ENCODE measurements at regions of chr15 and their contacts with region 1.

Region 1: GRCh38 chr15:51380999-51381795 is 39.7 kb downstream of the GLDN start:
- DNase-seq: peak in 1 of 2 donors; percentile 67
- ATAC-seq: peak; percentile 88 to 95 (median 91)
- H3K4me3 ChIP-seq: peak overlapping the region in 1 of 10 donors; percentile 21
- H3K27ac ChIP-seq: no peak overlapping the region
- H3K4me1 ChIP-seq: peaks cover 0 to 17% (median 8%) of the 10 kb centered on the region in 9 donors
- H3K27me3 ChIP-seq: no peaks in the 10 kb centered on the region
- CTCF ChIP-seq: peak; percentile 82 to 96 (median 89)

Region 2: GRCh38 chr15:50697109-50697797 is 683.9 kb before region 1 on chr15:
- intact Hi-C with region 1: no loop called
- DNase-seq: no peak
- ATAC-seq: no peak
- H3K4me3 ChIP-seq: no peak overlapping the region
- H3K27ac ChIP-seq: no peak overlapping the region
- H3K4me1 ChIP-seq: no peaks in the 10 kb centered on the region
- H3K27me3 ChIP-seq: no peaks in the 10 kb centered on the region
- CTCF ChIP-seq: no peak

Region 3: DNA sequence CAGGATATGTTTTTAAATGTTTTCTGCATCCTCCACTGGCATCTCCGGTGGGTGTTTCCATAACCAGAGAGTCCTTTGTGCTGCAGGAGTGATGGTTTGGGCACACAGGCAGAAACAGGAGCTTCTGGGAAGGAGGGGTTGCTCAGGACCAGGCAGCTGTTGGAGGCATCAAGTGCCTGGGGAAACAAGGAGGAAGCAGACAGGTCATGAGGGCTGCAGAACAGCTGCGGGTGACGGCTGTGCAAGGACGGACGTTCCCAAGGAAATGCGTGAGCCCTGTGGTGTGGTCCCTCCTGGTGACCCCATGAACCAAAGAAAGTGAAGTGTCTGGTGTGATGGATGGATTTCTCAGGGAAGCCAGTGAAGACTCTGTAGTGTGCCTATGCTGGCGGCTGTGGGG is 225.3 kb before region 1 on chr15:
- intact Hi-C with region 1: loop called in 5 of 10 experiments (anchors 5 to 10 kb)
- DNase-seq: no peak
- ATAC-seq: peak in 7 of 8 donors; percentile 17 to 88 (median 38)
- H3K4me3 ChIP-seq: no peak overlapping the region
- H3K27ac ChIP-seq: no peak overlapping the region
- H3K4me1 ChIP-seq: peaks cover 0 to 14% (median 0%) of the 10 kb centered on the region in 9 donors
- H3K27me3 ChIP-seq: no peaks in the 10 kb centered on the region
- CTCF ChIP-seq: no peak

Region 4: GRCh38 chr15:51162865-51163762 is 218.1 kb before region 1 on chr15:
- intact Hi-C with region 1: loop called (anchors 1 to 10 kb)
- DNase-seq: peak; percentile 55 to 74
- ATAC-seq: peak; percentile 82 to 96 (median 93)
- H3K4me3 ChIP-seq: peak overlapping the region in 6 of 10 donors; percentile 7 to 30 (median 18)
- H3K27ac ChIP-seq: peak overlapping the region in 8 of 10 donors; percentile 23 to 67 (median 62)
- H3K4me1 ChIP-seq: peaks cover 0 to 19% (median 8%) of the 10 kb centered on the region in 9 donors
- H3K27me3 ChIP-seq: no peaks in the 10 kb centered on the region
- CTCF ChIP-seq: peak; percentile 94 to 97 (median 96)

Region 5: GRCh38 chr15:51227940-51228783 is 153.0 kb before region 1 on chr15:
- intact Hi-C with region 1: loop called in 7 of 10 experiments (anchors 1 to 5 kb)
- DNase-seq: peak; percentile 16 to 22
- ATAC-seq: peak; percentile 51 to 93 (median 84)
- H3K4me3 ChIP-seq: no peak overlapping the region
- H3K27ac ChIP-seq: peak overlapping the region in 1 of 10 donors; percentile 62
- H3K4me1 ChIP-seq: peaks cover 0 to 52% (median 12%) of the 10 kb centered on the region in 9 donors
- H3K27me3 ChIP-seq: no peaks in the 10 kb centered on the region
- CTCF ChIP-seq: no peak

Region 6: GRCh38 chr15:51281368-51281967 is 99.7 kb before region 1 on chr15:
- intact Hi-C with region 1: loop called (anchors 1 to 5 kb)
- DNase-seq: peak; percentile 63 to 64
- ATAC-seq: peak; percentile 84 to 95 (median 92)
- H3K4me3 ChIP-seq: no peak overlapping the region
- H3K27ac ChIP-seq: peak overlapping the region in 5 of 10 donors; percentile 6 to 42 (median 26)
- H3K4me1 ChIP-seq: peaks cover 0 to 26% (median 0%) of the 10 kb centered on the region in 9 donors
- H3K27me3 ChIP-seq: peaks cover 0 to 18% (median 7%) of the 10 kb centered on the region in 7 donors
- CTCF ChIP-seq: peak; percentile 63 to 83 (median 78)

Region 7: GRCh38 chr15:51286791-51287190 is 94.4 kb before region 1 on chr15:
- intact Hi-C with region 1: loop called (anchors 1 to 5 kb)
- DNase-seq: no peak
- ATAC-seq: peak in 6 of 8 donors; percentile 50 to 61 (median 58)
- H3K4me3 ChIP-seq: no peak overlapping the region
- H3K27ac ChIP-seq: no peak overlapping the region
- H3K4me1 ChIP-seq: peaks cover 0 to 21% (median 0%) of the 10 kb centered on the region in 9 donors
- H3K27me3 ChIP-seq: no peaks in the 10 kb centered on the region
- CTCF ChIP-seq: peak in 8 of 9 donors; percentile 7 to 56 (median 40)

Region 8: DNA sequence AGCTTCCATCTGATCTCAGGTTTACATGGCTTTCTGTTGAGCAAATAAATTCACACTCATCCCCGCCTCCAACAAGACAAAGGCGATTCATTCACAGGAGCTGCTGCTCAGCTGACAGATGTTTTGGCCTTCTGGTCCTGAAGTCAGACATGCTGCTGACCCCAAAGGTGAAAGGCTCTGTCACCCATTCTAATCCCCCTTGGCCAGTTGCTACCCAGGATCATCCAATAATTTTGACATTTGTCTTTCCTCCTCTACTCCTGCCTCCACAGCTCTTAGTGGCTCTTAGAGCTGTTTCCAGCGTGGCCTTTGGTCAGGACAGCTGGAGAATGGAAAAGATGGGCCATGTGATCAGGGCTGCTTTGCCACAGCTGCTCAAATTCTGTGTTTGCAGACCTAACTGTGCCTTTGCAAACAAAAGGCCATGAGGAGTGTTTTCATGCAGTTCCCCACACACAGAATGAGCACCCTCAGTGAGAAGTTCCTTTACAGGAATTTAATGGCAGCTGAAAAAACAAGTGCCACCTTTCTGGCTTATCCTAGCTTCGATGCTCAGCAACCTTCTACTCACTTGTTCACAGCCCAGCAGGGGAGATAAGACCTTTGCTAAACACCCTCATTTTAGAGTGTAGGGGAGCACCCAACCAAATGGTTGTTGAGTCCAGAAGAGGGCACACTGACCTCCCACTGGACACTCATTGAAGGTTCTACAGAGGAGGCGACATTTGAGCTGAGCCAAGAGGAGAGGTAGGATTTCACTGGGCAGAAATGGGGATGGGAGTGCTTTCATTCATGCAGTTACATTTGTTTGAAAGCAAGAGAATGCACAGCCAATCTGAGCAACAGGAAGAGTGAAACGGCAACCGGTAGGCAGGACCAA is 81.8 kb before region 1 on chr15:
- intact Hi-C with region 1: no loop called
- DNase-seq: no peak
- ATAC-seq: peak in 4 of 8 donors; percentile 35 to 60 (median 45)
- H3K4me3 ChIP-seq: no peak overlapping the region
- H3K27ac ChIP-seq: peak overlapping the region in 3 of 10 donors; percentile 1 to 56 (median 17)
- H3K4me1 ChIP-seq: peaks cover 0 to 19% (median 8%) of the 10 kb centered on the region in 9 donors
- H3K27me3 ChIP-seq: no peaks in the 10 kb centered on the region
- CTCF ChIP-seq: no peak

Region 9: GRCh38 chr15:51322621-51323296 is 58.4 kb before region 1 on chr15:
- intact Hi-C with region 1: loop called in 1 of 10 experiments (anchors 5 kb)
- DNase-seq: peak; percentile 30 to 43
- ATAC-seq: peak; percentile 52 to 83 (median 64)
- H3K4me3 ChIP-seq: no peak overlapping the region
- H3K27ac ChIP-seq: peak overlapping the region in 7 of 10 donors; percentile 4 to 65 (median 42)
- H3K4me1 ChIP-seq: peaks cover 0 to 34% (median 13%) of the 10 kb centered on the region in 9 donors
- H3K27me3 ChIP-seq: no peaks in the 10 kb centered on the region
- CTCF ChIP-seq: no peak

Region 10: DNA sequence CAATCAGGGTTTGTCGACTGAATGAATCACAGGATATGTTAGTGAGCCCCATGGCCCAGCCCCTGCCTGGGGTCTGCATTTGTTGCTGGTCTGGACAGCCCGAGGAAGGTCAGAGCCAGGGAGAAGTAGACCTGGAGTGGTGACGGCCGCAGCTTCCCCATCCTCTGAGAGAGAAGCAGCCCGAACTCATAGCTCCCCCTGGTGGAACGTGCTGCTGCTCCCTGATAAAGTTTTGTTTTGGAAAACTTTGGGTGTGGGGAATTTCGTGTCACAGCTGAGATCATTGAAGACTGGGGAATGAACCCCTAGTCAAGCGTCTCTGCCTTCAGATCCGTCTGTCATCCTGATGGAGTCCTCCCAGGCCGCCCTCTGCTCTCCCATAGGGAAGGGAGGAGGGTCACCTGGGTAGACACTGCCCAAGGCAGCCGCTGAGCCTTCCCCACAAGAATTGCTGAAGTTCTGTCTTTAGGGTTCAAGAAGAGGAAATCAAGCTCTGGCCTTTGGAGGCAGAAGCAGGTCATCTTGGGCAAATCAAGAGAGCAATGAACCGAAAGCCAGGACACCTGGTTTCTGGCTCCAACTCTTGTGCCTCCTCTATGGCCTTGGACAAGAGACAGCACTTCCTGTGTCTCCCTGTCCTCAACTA is 20.8 kb after region 1 on chr15:
- intact Hi-C with region 1: no loop called
- DNase-seq: peak; percentile 27 to 34
- ATAC-seq: peak in 5 of 8 donors; percentile 46 to 59 (median 47)
- H3K4me3 ChIP-seq: no peak overlapping the region
- H3K27ac ChIP-seq: no peak overlapping the region
- H3K4me1 ChIP-seq: peaks cover 0 to 6% (median 0%) of the 10 kb centered on the region in 9 donors
- H3K27me3 ChIP-seq: peaks cover 0 to 3% (median 0%) of the 10 kb centered on the region in 7 donors
- CTCF ChIP-seq: peak in 8 of 9 donors; percentile 34 to 72 (median 54)

Measured in heart right ventricle (tissue), 16 donors.